ENCODE measurements at regions of chr12 and their contacts with region 1.

Region 1: GRCh38 chr12:131046813-131047788 is 93.4 kb downstream of the ADGRD1 start:
- DNase-seq: no peak
- ATAC-seq: peak; percentile 72

Region 2: DNA sequence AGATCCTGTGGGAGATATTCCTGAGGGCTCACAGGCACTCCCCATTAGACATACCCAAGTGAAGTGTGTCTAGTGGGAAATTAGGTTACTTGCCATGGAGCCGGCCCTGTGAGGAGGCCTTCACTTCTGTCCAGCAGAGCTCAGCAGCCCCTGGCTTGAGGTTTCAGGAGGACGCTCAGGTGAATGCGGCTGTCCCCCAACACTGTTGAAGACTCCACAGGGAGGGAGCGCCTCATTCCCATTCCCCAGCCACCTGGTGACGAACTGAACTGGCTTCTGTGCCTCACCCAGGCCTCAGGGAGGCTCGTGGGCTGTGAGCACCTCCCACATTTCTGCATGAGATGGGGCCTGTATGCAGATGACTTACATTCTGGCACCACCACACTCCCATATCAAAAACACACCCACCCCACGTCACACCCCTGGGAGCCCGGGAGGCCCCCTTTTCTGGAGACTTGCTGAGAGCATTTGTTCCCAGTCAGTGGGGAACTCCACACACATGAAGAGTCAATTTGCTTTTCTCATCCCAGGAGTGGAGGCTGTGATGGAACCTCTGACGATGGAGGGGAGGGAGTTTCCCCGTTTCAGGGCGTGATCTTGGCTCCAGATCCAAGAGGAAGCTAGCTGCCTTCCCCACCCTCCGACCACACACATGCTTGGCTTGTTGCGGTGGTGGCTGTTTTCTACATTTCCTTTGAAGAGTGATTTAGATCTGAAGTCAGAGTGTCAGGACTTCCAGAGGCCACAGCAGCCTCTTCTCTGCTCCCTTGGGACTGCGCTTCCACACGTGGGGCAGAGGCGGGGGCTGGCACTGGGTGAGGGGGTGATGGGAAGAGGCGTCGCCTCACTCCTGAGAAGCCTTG is 27.4 kb after region 1 on chr12:
- intact Hi-C with region 1: loop called (anchors 2 kb)
- DNase-seq: peak; percentile 72
- ATAC-seq: peak; percentile 71

Region 3: DNA sequence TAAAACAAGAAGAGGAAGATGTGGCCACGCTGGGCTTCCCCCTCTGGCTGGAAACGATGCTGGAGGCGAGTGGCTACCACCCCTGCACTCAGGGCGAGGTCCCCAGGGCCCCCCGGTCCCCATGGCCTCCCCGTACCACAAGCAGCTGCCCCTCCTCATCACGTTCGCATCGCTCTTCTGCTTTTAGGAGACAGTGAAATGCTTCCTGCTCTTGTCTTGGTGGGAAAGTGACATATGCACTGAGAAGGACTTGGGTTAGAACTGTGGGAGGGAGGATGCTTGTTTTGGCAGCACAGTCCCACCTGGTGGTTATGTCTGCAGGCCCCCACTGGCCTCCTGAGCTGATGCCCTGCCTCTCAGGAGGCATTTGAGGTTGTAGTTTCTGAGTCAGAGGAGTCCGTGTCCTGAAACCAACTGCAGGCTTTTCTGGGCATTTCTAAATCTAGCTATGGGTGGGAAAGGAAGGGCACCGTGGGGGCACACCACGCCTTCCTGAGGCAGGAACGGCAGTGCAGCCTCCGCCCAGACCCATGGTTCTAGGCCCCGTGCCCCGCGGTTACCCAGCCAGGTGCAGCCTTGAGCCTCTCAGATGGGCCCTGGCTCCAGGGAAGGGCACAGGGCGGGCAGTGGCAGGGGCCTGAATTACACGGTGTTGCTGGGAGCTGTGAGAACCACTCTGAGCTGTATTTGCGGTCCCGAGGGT is 46.0 kb after region 1 on chr12:
- intact Hi-C with region 1: loop called (anchors 5 kb)
- DNase-seq: peak; percentile 67
- ATAC-seq: no peak

Measured in Right ventricle myocardium inferior (tissue), 1 donor.